Endothelial cell of umbilical vein (primary cell): ENCODE measurements at regions of chr2 and their contacts with region 1.

Region 1: DNA sequence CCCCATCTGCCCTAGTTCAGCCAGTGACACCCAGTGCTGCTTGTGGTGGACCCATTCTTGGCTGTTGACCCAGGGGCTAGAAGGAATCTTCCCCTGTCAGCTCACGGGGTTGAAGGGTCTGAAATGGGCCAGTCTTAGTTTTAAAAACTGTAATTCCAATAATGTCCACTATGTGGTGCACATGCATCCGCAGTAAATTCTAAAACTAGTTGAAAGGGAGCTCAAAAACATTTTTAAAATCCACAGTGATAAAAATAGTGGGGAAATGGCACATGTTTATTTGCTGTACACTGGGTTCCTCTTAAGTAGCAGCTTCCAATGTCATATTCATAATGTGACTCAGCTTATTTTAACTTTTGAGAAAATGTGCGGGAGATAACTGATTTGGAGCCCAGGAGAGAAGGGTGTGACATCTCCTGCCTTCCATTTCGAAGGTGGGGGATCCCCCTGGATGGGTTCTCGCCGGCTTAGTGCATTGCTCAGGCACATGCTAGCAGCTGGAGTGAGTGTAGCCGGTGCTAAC is 32.8 kb downstream of the GRHL1 start:
- DNase-seq: peak; percentile 73
- H3K4me3 ChIP-seq: no peak overlapping the region
- H3K27ac ChIP-seq: no peak overlapping the region
- H3K4me1 ChIP-seq: peaks cover 5% of the 10 kb centered on the region
- H3K27me3 ChIP-seq: no peaks in the 10 kb centered on the region
- CTCF ChIP-seq: peak; percentile 46 to 60
- POLR2A ChIP-seq: no peak

Region 2: DNA sequence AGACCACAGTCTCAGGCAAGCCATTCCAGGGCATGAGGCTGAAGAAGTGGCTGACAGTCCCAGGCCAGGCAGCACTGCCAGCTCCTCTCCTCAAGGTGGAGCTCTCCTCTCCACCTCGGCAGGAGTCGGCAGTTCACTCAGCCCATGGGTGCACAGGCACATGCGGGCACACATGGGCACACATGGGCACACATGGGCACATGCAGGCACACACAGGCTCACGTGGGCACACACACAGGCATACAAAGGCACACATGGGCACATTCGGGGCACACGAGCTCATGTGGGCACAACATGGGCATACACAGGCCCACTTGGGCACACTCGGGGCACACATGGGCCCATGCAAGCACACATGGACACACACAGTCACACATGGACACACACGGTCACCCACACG is 206.3 kb before region 1 on chr2:
- CTCF ChIA-PET with region 1: no interaction called
- POLR2A ChIA-PET with region 1: no interaction called
- dilution Hi-C with region 1: no loop called
- intact Hi-C with region 1: no loop called
- DNase-seq: no peak
- H3K4me3 ChIP-seq: no peak overlapping the region
- H3K27ac ChIP-seq: no peak overlapping the region
- H3K4me1 ChIP-seq: no peaks in the 10 kb centered on the region
- H3K27me3 ChIP-seq: no peaks in the 10 kb centered on the region
- CTCF ChIP-seq: peak; percentile 26 to 45
- POLR2A ChIP-seq: no peak

Region 3: GRCh38 chr2:9813312-9814133 is 170.8 kb before region 1 on chr2:
- CTCF ChIA-PET with region 1: interaction called, 65 read pairs
- POLR2A ChIA-PET with region 1: no interaction called
- dilution Hi-C with region 1: no loop called
- intact Hi-C with region 1: no loop called
- DNase-seq: peak; percentile 61
- H3K4me3 ChIP-seq: no peak overlapping the region
- H3K27ac ChIP-seq: no peak overlapping the region
- H3K4me1 ChIP-seq: peaks cover 6% of the 10 kb centered on the region
- H3K27me3 ChIP-seq: no peaks in the 10 kb centered on the region
- CTCF ChIP-seq: peak; percentile 96 to 97
- POLR2A ChIP-seq: no peak

Region 4: GRCh38 chr2:9944325-9944758 is 39.9 kb before region 1 on chr2:
- CTCF ChIA-PET with region 1: interaction called, 12 read pairs
- POLR2A ChIA-PET with region 1: no interaction called
- dilution Hi-C with region 1: no loop called
- intact Hi-C with region 1: no loop called
- DNase-seq: no peak
- H3K4me3 ChIP-seq: no peak overlapping the region
- H3K27ac ChIP-seq: no peak overlapping the region
- H3K4me1 ChIP-seq: no peaks in the 10 kb centered on the region
- H3K27me3 ChIP-seq: peaks cover 11 to 14% of the 10 kb centered on the region in 2 experiments
- CTCF ChIP-seq: no peak
- POLR2A ChIP-seq: no peak

Region 5: DNA sequence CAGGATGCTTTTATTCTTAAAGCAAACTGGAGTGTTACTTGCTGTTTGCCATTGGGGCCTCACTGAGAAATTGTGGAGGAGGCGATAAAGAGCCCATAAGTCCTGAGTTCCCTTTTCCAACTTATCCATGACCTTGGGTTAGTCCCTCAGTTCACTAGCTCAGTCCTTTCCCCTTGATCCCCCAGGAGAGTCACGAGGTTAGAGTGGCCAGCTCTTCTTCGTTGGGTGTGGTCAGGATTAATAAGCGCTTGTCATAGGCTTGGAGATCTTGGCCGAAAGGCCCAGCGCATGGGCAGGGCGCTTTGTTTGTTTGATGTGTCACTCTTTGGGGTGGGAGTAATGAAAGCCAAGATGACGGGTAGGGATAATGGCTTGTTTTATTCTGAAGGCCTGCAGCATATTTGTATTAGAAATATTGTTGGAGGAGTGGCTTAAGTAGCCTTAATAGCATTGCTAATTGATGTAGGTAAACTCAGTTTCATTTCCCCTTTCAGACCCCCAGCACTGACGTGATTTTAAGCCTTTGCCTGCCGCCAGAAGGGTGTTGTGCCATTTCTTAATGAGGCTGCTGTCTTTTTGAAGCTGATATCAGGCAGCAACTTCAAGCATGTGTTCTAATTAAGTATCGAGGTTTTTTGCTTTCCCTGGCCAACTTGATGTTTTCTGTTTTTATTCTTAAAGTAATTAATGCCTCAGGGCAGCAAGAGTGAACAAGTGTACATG is 17.1 kb before region 1 on chr2:
- CTCF ChIA-PET with region 1: interaction called, 19 read pairs
- POLR2A ChIA-PET with region 1: no interaction called
- dilution Hi-C with region 1: no loop called
- intact Hi-C with region 1: no loop called
- DNase-seq: no peak
- H3K4me3 ChIP-seq: no peak overlapping the region
- H3K27ac ChIP-seq: no peak overlapping the region
- H3K4me1 ChIP-seq: no peaks in the 10 kb centered on the region
- H3K27me3 ChIP-seq: no peaks in the 10 kb centered on the region
- CTCF ChIP-seq: no peak
- POLR2A ChIP-seq: no peak

Region 6: GRCh38 chr2:10028988-10029874 is 45.0 kb after region 1 on chr2:
- CTCF ChIA-PET with region 1: interaction called, 151 read pairs
- POLR2A ChIA-PET with region 1: no interaction called
- dilution Hi-C with region 1: no loop called
- intact Hi-C with region 1: no loop called
- DNase-seq: peak; percentile 19
- H3K4me3 ChIP-seq: no peak overlapping the region
- H3K27ac ChIP-seq: no peak overlapping the region
- H3K4me1 ChIP-seq: peaks cover 7% of the 10 kb centered on the region
- H3K27me3 ChIP-seq: no peaks in the 10 kb centered on the region
- CTCF ChIP-seq: no peak
- POLR2A ChIP-seq: no peak

Region 7: GRCh38 chr2:10057231-10058107 is 73.2 kb after region 1 on chr2:
- CTCF ChIA-PET with region 1: interaction called, 340 read pairs
- POLR2A ChIA-PET with region 1: no interaction called
- dilution Hi-C with region 1: no loop called
- intact Hi-C with region 1: no loop called
- DNase-seq: peak; percentile 31
- H3K4me3 ChIP-seq: no peak overlapping the region
- H3K27ac ChIP-seq: no peak overlapping the region
- H3K4me1 ChIP-seq: peaks cover 4% of the 10 kb centered on the region
- H3K27me3 ChIP-seq: no peaks in the 10 kb centered on the region
- CTCF ChIP-seq: no peak
- POLR2A ChIP-seq: no peak